Posterior cingulate gyrus (tissue), 11 donors: ENCODE measurements at regions of chr19 and their contacts with region 1.

Region 1: GRCh38 chr19:56121180-56122167 is at the start of gene ZNF787:
- DNase-seq: peak; percentile 95 to 100 (median 98)

Region 2: GRCh38 chr19:56140583-56141416 is 19.3 kb after region 1 on chr19 and contains the start of gene ZNF444:
- intact Hi-C with region 1: loop called (anchors 1 kb)
- DNase-seq: peak; percentile 99 to 100 (median 100)